CD8-positive, alpha-beta T cell (primary cell): ENCODE measurements at regions of chr6 and their contacts with region 1.

Region 1: GRCh38 chr6:28266962-28267694 is at the start of gene ZSCAN26:
- DNase-seq: peak; percentile 76 to 93 (median 88)
- ATAC-seq: peak; percentile 95
- H3K4me3 ChIP-seq: peak within 1 kb of the TSS; percentile 92 to 97
- H3K4me3 Mint-ChIP-seq: no peak within 1 kb of the TSS
- H3K27ac ChIP-seq: peak within 1 kb of the TSS; percentile 77 to 87
- H3K27ac Mint-ChIP-seq: no peak within 1 kb of the TSS
- H3K4me1 ChIP-seq: peaks cover 21% of the 10 kb centered on the region
- H3K4me1 Mint-ChIP-seq: peaks cover 31% of the 10 kb centered on the region
- H3K27me3 ChIP-seq: no peaks in the 10 kb centered on the region
- H3K27me3 Mint-ChIP-seq: no peaks in the 10 kb centered on the region
- CTCF ChIP-seq: no peak
- total RNA-seq, gene ZSCAN26: 11.1 to 14.7 TPM

Region 2: GRCh38 chr6:28080631-28081485 is 186.3 kb before region 1 on chr6:
- CTCF ChIA-PET with region 1: no interaction called
- POLR2A ChIA-PET with region 1: no interaction called
- intact Hi-C with region 1: loop called in 1 of 2 experiments (anchors 5 kb)
- DNase-seq: peak; percentile 86 to 96 (median 94)
- ATAC-seq: peak; percentile 74
- H3K4me3 ChIP-seq: peak overlapping the region; percentile 69 to 93
- H3K4me3 Mint-ChIP-seq: peak overlapping the region; percentile 98
- H3K27ac ChIP-seq: peak overlapping the region; percentile 91 to 96
- H3K27ac Mint-ChIP-seq: peak overlapping the region; percentile 99
- H3K4me1 ChIP-seq: peaks cover 13% of the 10 kb centered on the region
- H3K4me1 Mint-ChIP-seq: peaks cover 21% of the 10 kb centered on the region
- H3K27me3 ChIP-seq: no peaks in the 10 kb centered on the region
- H3K27me3 Mint-ChIP-seq: no peaks in the 10 kb centered on the region
- CTCF ChIP-seq: no peak

Region 3: DNA sequence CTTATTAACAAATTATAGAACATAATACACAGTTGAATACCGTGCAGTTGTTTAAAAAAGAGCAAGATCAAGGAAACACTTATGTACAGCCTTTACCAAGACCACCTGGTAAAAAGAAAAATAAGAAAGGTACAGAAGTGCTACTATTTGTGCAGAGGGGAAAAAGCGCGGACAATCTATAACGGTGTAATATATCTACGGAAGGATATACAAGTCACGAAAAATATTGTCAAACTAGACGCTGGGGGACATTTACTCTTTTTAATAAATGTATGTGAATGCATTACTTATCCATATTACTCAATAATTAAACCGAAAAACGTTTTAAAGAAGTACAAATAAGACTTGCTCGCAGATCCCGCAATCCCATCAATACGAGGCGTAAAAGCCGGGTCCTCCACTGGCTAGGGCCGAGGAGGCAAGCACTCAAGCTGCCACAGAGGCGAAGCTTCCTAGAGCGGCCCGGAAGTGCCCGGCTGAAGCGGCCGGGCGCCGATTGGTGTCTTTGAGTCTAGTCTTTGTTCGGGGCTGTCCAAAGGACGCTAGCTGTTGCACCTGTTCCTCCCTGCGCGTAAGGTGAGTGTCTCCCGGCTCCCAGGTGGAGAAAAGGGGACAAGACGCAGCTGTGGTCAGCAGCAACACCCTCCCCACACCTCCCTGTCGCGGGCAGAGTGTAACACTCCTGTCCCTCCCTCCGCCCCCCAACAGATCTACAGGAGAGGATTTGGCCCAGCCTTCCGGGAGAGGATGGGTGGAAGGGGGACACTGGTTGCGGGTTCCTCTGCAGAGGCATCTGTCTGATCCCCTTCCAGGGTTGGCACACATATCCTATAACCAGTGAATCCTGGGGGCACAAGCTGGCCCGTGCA is 142.8 kb before region 1 on chr6 and contains the start of gene ZSCAN16:
- CTCF ChIA-PET with region 1: no interaction called
- POLR2A ChIA-PET with region 1: no interaction called
- intact Hi-C with region 1: loop called in 1 of 2 experiments (anchors 1 kb)
- DNase-seq: peak; percentile 59 to 86 (median 76)
- ATAC-seq: peak; percentile 72
- H3K4me3 ChIP-seq: peak within 1 kb of the TSS; percentile 79 to 86
- H3K4me3 Mint-ChIP-seq: peak within 1 kb of the TSS; percentile 95
- H3K27ac ChIP-seq: peak within 1 kb of the TSS; percentile 76 to 89
- H3K27ac Mint-ChIP-seq: peak within 1 kb of the TSS; percentile 97
- H3K4me1 ChIP-seq: peaks cover 11% of the 10 kb centered on the region
- H3K4me1 Mint-ChIP-seq: peaks cover 42% of the 10 kb centered on the region
- H3K27me3 ChIP-seq: no peaks in the 10 kb centered on the region
- H3K27me3 Mint-ChIP-seq: no peaks in the 10 kb centered on the region
- CTCF ChIP-seq: no peak
- total RNA-seq, gene ZSCAN16: 5.2 to 6.0 TPM

Region 4: DNA sequence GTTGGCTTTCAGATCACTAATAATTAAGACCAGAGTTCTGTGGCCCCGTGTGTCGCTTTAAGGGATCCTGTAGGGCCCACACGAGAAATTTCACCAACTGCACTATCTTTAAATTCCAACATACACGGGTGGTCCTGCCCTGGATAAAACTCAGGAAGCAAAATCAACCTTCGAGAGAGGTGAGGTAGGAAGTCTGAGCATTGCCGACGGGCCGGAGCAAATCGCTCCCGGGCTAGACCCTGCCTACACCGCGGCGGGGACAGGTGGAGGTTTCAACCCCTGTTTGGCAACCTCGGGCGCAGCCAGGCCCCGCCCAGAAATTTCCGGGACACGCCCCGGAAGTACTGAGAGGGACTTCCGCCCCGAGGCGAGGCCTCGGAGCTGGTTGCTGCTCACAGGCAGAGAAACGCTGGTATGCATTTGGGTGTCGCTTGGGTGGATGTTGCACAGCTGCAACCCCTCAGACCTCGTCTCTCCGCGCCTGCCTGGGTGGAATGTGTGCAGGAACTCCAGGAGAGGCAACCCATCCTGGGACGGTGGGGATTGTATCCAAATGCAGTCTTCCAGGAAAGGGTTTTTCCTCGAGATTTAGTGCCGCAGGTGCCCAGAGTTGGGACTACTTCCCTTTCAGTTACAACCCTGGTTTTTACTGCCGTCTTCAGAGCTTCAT is 105.6 kb before region 1 on chr6:
- CTCF ChIA-PET with region 1: no interaction called
- POLR2A ChIA-PET with region 1: interaction called, 11 read pairs
- intact Hi-C with region 1: loop called in 1 of 2 experiments (anchors 5 kb)
- DNase-seq: peak; percentile 70 to 90 (median 83)
- ATAC-seq: peak; percentile 98
- H3K4me3 ChIP-seq: peak overlapping the region; percentile 45 to 49
- H3K4me3 Mint-ChIP-seq: peak overlapping the region; percentile 76
- H3K27ac ChIP-seq: peak overlapping the region in 1 of 2 experiments; percentile 4
- H3K27ac Mint-ChIP-seq: no peak overlapping the region
- H3K4me1 ChIP-seq: peaks cover 12% of the 10 kb centered on the region
- H3K4me1 Mint-ChIP-seq: peaks cover 15% of the 10 kb centered on the region
- H3K27me3 ChIP-seq: no peaks in the 10 kb centered on the region
- H3K27me3 Mint-ChIP-seq: peaks cover 4% of the 10 kb centered on the region
- CTCF ChIP-seq: no peak

Region 5: DNA sequence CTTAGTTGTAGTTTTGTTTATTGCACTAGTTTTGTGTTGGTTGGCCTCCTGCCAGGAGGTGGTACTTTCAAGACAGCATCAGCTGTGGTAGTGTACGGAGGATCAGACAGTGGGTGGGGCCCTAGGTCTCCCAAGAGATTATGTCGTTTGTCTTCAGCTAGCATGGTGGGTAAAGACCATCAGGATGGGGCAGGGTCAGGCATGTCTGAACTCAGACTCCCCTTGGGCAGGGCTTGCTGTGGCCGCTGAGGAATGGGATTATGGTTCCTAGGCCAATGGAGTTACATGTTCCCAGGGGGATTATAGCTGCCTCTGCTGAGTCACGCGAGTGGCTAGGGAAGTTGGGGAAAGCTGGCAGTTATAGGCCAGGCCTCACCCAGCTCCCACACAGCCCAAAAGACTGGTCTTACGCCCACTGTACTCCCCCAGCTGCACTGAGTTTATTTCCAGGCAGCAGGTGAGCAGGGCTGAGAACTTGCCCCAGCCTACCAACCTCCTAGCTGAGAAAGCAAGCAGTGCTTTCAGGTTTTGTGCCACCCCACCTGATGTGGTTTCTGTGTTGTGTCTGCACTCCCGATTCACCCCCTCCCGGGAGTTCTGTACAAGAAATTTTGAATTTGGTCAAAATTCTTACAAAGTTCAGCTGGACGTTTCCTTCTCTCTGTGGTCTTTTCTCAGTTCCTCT is 44.2 kb after region 1 on chr6:
- CTCF ChIA-PET with region 1: no interaction called
- POLR2A ChIA-PET with region 1: no interaction called
- intact Hi-C with region 1: no loop called
- DNase-seq: no peak
- ATAC-seq: no peak
- H3K4me3 ChIP-seq: no peak overlapping the region
- H3K4me3 Mint-ChIP-seq: no peak overlapping the region
- H3K27ac ChIP-seq: no peak overlapping the region
- H3K27ac Mint-ChIP-seq: no peak overlapping the region
- H3K4me1 ChIP-seq: no peaks in the 10 kb centered on the region
- H3K4me1 Mint-ChIP-seq: no peaks in the 10 kb centered on the region
- H3K27me3 ChIP-seq: no peaks in the 10 kb centered on the region
- H3K27me3 Mint-ChIP-seq: peaks cover 16% of the 10 kb centered on the region
- CTCF ChIP-seq: no peak

Region 6: GRCh38 chr6:28349892-28350737 is 83.0 kb after region 1 on chr6 and contains the start of gene ZKSCAN3:
- CTCF ChIA-PET with region 1: interaction called, 11 read pairs
- POLR2A ChIA-PET with region 1: interaction called, 4 read pairs
- intact Hi-C with region 1: loop called (anchors 1 kb)
- DNase-seq: peak; percentile 57 to 88 (median 82)
- ATAC-seq: peak; percentile 99
- H3K4me3 ChIP-seq: peak within 1 kb of the TSS; percentile 69 to 81
- H3K4me3 Mint-ChIP-seq: peak within 1 kb of the TSS; percentile 98
- H3K27ac ChIP-seq: peak within 1 kb of the TSS; percentile 54 to 55
- H3K27ac Mint-ChIP-seq: peak within 1 kb of the TSS; percentile 95
- H3K4me1 ChIP-seq: peaks cover 15% of the 10 kb centered on the region
- H3K4me1 Mint-ChIP-seq: peaks cover 36% of the 10 kb centered on the region
- H3K27me3 ChIP-seq: peaks cover 0 to 3% of the 10 kb centered on the region in 2 experiments
- H3K27me3 Mint-ChIP-seq: peaks cover 12% of the 10 kb centered on the region
- CTCF ChIP-seq: no peak
- total RNA-seq, gene ZKSCAN3: 0.61 to 0.68 TPM

Region 7: GRCh38 chr6:28399350-28400121 is 132.4 kb after region 1 on chr6 and contains the start of gene ZSCAN12:
- CTCF ChIA-PET with region 1: no interaction called
- POLR2A ChIA-PET with region 1: no interaction called
- intact Hi-C with region 1: loop called (anchors 2 to 5 kb)
- DNase-seq: peak; percentile 76 to 92 (median 86)
- ATAC-seq: peak; percentile 96
- H3K4me3 ChIP-seq: peak within 1 kb of the TSS; percentile 87 to 96
- H3K4me3 Mint-ChIP-seq: peak within 1 kb of the TSS; percentile 93
- H3K27ac ChIP-seq: peak within 1 kb of the TSS; percentile 73 to 85
- H3K27ac Mint-ChIP-seq: peak within 1 kb of the TSS; percentile 97
- H3K4me1 ChIP-seq: peaks cover 32% of the 10 kb centered on the region
- H3K4me1 Mint-ChIP-seq: peaks cover 47% of the 10 kb centered on the region
- H3K27me3 ChIP-seq: no peaks in the 10 kb centered on the region
- H3K27me3 Mint-ChIP-seq: peaks cover 34% of the 10 kb centered on the region
- CTCF ChIP-seq: no peak
- total RNA-seq, gene ZSCAN12: 2.8 to 3.0 TPM